Activated T-helper 1 cell treated with anti-CD3 and anti-CD28 coated beads, Interleukin-12 subunit alpha, Interleukin-12 subunit beta, Interleukin-2, Interleukin-4 antibody, amounts not matched to agents 30 ng/mL and 10 ng/mL and 1 ng/mL, durations not matched to agents 14 hours and 24 hours and 36 hours (primary cell): ENCODE measurements at regions of chr4 and their contacts with region 1.

Region 1: DNA sequence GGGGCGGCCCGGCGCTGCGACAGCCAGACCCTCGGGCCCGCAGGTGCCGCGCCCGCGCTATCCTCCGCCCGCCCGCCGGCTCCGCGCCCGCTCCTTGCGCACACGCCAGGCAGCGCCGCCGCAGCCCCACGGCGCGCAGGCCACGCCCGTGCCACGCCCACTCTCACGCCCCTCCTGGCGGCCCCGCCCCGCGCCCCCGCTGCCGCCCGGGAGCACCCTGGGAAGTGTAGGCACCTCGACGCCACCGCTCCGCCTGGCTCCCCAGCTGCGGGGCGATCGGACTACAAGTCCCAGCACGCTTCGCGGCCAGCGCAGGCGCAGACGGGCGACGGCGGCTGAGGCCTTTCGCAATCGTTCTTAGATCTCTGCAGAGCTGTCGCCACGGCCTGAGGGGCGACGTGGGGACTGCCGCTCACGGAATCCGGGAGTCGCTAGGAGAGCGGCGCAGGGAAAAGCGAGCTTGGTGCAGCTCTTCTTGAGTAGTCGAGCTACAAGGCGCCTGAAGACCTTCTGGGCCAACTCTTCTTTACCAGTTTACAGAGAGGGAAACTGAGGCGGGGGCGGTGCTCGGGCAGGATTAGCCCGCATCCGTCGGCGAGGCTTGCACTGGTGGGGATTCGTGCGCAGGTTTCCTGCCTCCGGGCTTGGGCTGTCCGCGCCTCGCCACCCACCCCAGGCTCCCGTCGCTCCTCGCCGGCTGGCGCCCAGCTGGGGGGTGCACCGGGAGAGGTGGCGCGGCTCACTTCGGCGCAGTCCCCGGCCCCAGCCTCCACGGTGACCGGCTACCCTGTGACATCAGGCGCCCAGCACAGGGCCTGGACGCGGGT is at the start of gene ABLIM2:
- DNase-seq: peak; percentile 99
- H3K4me3 Mint-ChIP-seq: peak within 1 kb of the TSS; percentile 98
- H3K27ac Mint-ChIP-seq: peak within 1 kb of the TSS; percentile 42
- H3K4me1 Mint-ChIP-seq: peaks cover 5% of the 10 kb centered on the region
- H3K27me3 Mint-ChIP-seq: peaks cover 22% of the 10 kb centered on the region
- total RNA-seq, gene ABLIM2: 0.24 and 0.36 TPM in 2 replicates

Region 2: GRCh38 chr4:6574747-6575502 is 1584.0 kb before region 1 on chr4 and contains the start of gene MAN2B2:
- intact Hi-C with region 1: loop called (anchors 10 kb)
- DNase-seq: peak; percentile 83
- H3K4me3 Mint-ChIP-seq: peak within 1 kb of the TSS; percentile 87
- H3K27ac Mint-ChIP-seq: peak within 1 kb of the TSS; percentile 71
- H3K4me1 Mint-ChIP-seq: no peaks in the 10 kb centered on the region
- H3K27me3 Mint-ChIP-seq: peaks cover 5% of the 10 kb centered on the region
- total RNA-seq, gene MAN2B2: 13.9 and 14.0 TPM in 2 replicates

Region 3: GRCh38 chr4:7939377-7940108 is 219.4 kb before region 1 on chr4 and contains the start of gene AFAP1:
- intact Hi-C with region 1: loop called (anchors 1 kb)
- DNase-seq: peak; percentile 85
- H3K4me3 Mint-ChIP-seq: peak within 1 kb of the TSS; percentile 74
- H3K27ac Mint-ChIP-seq: no peak within 1 kb of the TSS
- H3K4me1 Mint-ChIP-seq: peaks cover 22% of the 10 kb centered on the region
- H3K27me3 Mint-ChIP-seq: peaks cover 25% of the 10 kb centered on the region
- total RNA-seq, gene AFAP1: 48.3 and 48.4 TPM in 2 replicates

Region 4: DNA sequence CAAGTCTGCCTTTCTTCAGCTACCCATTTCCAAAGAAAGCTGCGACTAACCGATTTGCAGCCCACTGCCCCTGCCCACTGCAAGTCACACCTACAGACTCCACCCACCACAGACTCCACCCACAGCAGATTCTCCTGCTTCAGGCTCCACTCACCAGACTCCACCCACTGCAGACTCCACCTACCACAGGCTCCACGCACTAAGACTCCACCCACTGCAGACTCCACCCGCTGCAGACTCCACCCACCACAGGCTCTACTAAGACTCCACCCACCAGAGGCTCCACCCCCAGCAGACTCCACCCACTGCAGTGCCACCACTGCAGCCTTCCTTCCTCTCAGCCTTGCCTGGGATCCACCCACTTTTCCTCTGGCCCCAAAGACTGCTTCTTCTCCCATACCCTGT is 41.6 kb before region 1 on chr4:
- intact Hi-C with region 1: loop called (anchors 1 kb)
- DNase-seq: peak; percentile 22
- H3K4me3 Mint-ChIP-seq: no peak overlapping the region
- H3K27ac Mint-ChIP-seq: no peak overlapping the region
- H3K4me1 Mint-ChIP-seq: no peaks in the 10 kb centered on the region
- H3K27me3 Mint-ChIP-seq: peaks cover 2% of the 10 kb centered on the region

Region 5: DNA sequence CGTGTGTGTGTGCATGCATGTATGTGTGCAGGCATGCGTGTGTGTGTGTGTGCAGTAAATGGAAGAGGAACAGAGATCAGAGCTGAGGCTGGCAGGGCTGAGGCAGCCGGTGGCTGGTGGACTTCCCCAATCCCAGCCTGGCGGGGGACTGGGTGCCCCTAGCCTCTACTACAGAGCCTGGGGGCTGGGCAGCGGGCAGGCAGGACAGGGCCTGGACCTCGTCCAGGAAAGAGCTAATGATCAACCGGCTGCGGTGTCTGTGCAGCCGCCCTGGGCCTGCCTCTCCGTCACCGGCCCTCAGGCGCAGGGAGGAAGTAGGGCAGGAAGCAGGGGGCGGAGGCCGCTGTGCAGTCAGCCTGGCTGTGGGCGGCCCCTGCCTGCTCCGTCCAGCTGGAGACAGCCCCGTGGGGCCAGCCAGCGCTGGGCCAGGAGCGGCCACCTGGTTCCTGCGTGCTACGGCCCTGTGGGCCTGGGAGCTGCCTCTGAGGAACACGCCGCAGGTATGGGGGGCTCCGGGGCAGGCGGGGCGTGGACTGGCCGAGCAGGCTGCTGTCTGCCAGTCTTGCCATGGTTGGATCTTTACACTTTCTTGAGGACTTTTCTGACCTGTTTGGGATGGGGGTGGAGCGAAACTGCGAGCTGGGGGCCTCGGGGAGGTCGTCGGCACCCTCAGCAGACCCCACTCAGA is 40.1 kb after region 1 on chr4 and contains the start of gene SH3TC1:
- intact Hi-C with region 1: loop called (anchors 1 kb)
- DNase-seq: peak; percentile 65
- H3K4me3 Mint-ChIP-seq: peak within 1 kb of the TSS; percentile 89
- H3K27ac Mint-ChIP-seq: peak within 1 kb of the TSS; percentile 95
- H3K4me1 Mint-ChIP-seq: peaks cover 30% of the 10 kb centered on the region
- H3K27me3 Mint-ChIP-seq: peaks cover 1% of the 10 kb centered on the region
- total RNA-seq, gene SH3TC1: 25.4 and 33.6 TPM in 2 replicates

Region 6: GRCh38 chr4:8391972-8392371 is 233.0 kb after region 1 on chr4:
- intact Hi-C with region 1: no loop called
- DNase-seq: no peak
- H3K4me3 Mint-ChIP-seq: no peak overlapping the region
- H3K27ac Mint-ChIP-seq: peak overlapping the region; percentile 61
- H3K4me1 Mint-ChIP-seq: peaks cover 9% of the 10 kb centered on the region
- H3K27me3 Mint-ChIP-seq: no peaks in the 10 kb centered on the region

Region 7: GRCh38 chr4:8428293-8429097 is 269.6 kb after region 1 on chr4:
- intact Hi-C with region 1: loop called (anchors 1 kb)
- DNase-seq: peak; percentile 92
- H3K4me3 Mint-ChIP-seq: peak overlapping the region; percentile 92
- H3K27ac Mint-ChIP-seq: peak overlapping the region; percentile 86
- H3K4me1 Mint-ChIP-seq: peaks cover 20% of the 10 kb centered on the region
- H3K27me3 Mint-ChIP-seq: no peaks in the 10 kb centered on the region